ENCODE measurements at regions of chr6 and their contacts with region 1.

Region 1: DNA sequence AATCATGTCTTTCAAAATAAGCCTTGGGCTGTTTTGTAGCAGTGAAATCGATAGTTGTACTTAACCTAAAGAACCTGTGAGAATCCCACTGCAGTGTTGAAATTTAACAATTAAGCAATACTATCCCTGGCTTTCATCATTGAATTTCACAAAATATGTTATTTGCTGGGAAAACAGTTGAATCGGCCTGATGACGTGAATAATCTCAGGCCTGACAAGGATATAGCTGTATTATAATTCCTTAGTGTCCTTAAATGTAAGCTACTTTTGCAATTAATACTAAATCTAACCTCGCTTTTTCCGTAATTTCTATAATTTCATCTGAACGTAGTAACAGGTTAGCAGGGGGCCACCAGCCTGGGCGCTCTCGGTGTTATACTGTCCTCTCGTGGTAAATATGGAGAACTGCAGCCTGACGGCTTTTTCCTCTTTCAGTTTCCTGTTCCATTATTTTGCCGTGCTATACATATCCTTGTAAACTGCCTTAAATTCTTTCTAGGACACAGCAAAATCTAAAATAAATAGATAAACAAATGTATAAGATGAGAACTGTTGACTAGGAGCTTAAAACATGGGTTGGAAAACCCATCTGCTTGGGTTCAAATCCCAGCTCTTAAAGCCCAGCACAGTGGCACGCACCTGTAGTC is 24.0 kb downstream of the MTFR2 start:
- DNase-seq: peak; percentile 69
- ATAC-seq: peak; percentile 83
- H3K4me3 ChIP-seq: peak overlapping the region in 1 of 2 experiments; percentile 21; a peak in 2 of 4 replicates
- H3K27ac ChIP-seq: no peak overlapping the region
- H3K4me1 ChIP-seq: 0 out of 2 replicates have a peak, but pooled peaks cover 3% of the 10 kb centered on the region
- H3K27me3 ChIP-seq: no peaks in the 10 kb centered on the region
- CTCF ChIP-seq: peak; percentile 100

Region 2: DNA sequence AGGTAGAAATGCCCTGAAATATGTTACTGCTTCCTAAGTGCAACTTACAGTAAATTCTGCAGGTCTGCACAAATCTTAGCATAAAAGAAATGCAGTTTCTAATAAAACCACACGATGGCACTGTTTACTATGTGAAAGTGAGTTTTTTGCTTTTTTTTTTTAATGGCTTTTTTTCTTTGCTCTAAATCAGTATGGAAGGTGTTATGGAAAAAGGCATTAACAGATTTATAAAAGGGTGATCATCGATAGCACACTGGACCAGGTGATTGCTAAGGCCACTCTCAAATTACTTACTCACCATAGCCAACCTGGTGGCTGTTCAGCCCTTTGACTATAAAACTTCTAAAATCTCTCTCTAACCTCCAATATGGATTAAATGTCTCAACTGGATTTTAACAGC is 774.5 kb before region 1 on chr6:
- CTCF ChIA-PET with region 1: no interaction called
- POLR2A ChIA-PET with region 1: no interaction called
- in situ Hi-C with region 1: no loop called
- intact Hi-C with region 1: loop called (anchors 5 kb)
- DNase-seq: peak; percentile 15
- ATAC-seq: no peak
- H3K4me3 ChIP-seq: no peak overlapping the region
- H3K27ac ChIP-seq: no peak overlapping the region
- H3K4me1 ChIP-seq: no peaks in the 10 kb centered on the region
- H3K27me3 ChIP-seq: no peaks in the 10 kb centered on the region
- CTCF ChIP-seq: peak; percentile 74; the same call in 1 of the 2 replicates

Region 3: DNA sequence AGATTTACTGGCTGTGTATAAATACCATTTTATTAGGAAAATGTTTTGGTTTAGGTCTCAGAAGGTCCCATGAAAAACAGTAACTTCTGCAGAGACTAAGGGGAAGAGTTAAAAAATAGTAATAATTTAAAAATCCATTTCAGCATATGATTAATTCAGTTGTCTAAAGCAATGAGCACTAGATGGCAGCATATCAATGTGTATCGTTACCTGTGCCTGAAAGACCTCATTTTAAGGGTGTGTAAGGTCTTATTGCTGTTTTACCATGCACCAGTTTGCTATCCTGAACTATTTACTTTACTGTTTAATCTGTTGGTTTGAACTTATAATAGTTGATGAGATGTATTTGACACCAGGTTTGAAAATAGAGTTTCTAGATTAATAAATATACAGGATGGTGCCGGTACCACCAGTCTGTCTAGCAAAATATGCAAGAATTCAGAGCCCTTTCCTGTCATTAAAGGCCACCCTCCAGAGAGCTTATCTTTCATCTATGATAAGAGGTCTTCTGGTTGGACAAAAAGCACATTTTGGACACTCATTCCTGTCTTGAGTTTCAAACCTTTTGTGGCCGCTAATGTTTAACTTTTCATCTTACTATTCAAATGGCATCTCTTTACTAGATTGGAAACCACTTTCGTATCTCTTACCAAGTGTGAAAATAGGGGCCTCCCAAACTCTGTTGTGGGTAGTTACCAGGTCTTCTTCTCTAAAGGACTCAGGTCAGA is 719.7 kb before region 1 on chr6:
- CTCF ChIA-PET with region 1: no interaction called
- POLR2A ChIA-PET with region 1: no interaction called
- in situ Hi-C with region 1: no loop called
- intact Hi-C with region 1: loop called (anchors 1 kb)
- DNase-seq: no peak
- ATAC-seq: peak; percentile 79
- H3K4me3 ChIP-seq: no peak overlapping the region
- H3K27ac ChIP-seq: no peak overlapping the region
- H3K4me1 ChIP-seq: no peaks in the 10 kb centered on the region
- H3K27me3 ChIP-seq: no peaks in the 10 kb centered on the region
- CTCF ChIP-seq: peak; percentile 67; the same call in 1 of the 2 replicates

Region 4: GRCh38 chr6:135535989-135536414 is 690.1 kb before region 1 on chr6:
- CTCF ChIA-PET with region 1: interaction called, 15 read pairs
- POLR2A ChIA-PET with region 1: no interaction called
- in situ Hi-C with region 1: no loop called
- intact Hi-C with region 1: loop called (anchors 1 kb)
- DNase-seq: no peak
- ATAC-seq: peak; percentile 70
- H3K4me3 ChIP-seq: no peak overlapping the region
- H3K27ac ChIP-seq: no peak overlapping the region
- H3K4me1 ChIP-seq: no peaks in the 10 kb centered on the region
- H3K27me3 ChIP-seq: no peaks in the 10 kb centered on the region
- CTCF ChIP-seq: peak; percentile 78

Region 5: GRCh38 chr6:135675862-135676261 is 550.3 kb before region 1 on chr6:
- CTCF ChIA-PET with region 1: no interaction called
- POLR2A ChIA-PET with region 1: no interaction called
- in situ Hi-C with region 1: no loop called
- intact Hi-C with region 1: loop called (anchors 10 kb)
- DNase-seq: peak; percentile 4
- ATAC-seq: no peak
- H3K4me3 ChIP-seq: no peak overlapping the region
- H3K27ac ChIP-seq: no peak overlapping the region
- H3K4me1 ChIP-seq: no peaks in the 10 kb centered on the region
- H3K27me3 ChIP-seq: no peaks in the 10 kb centered on the region
- CTCF ChIP-seq: peak; percentile 24; the same call in 1 of the 2 replicates

Region 6: GRCh38 chr6:136031982-136032381 is 194.2 kb before region 1 on chr6:
- CTCF ChIA-PET with region 1: no interaction called
- POLR2A ChIA-PET with region 1: no interaction called
- in situ Hi-C with region 1: no loop called
- intact Hi-C with region 1: loop called (anchors 10 kb)
- DNase-seq: no peak
- ATAC-seq: no peak
- H3K4me3 ChIP-seq: no peak overlapping the region
- H3K27ac ChIP-seq: no peak overlapping the region
- H3K4me1 ChIP-seq: no peaks in the 10 kb centered on the region
- H3K27me3 ChIP-seq: no peaks in the 10 kb centered on the region
- CTCF ChIP-seq: peak; percentile 43; the same call in 1 of the 2 replicates

Measured in Panc1 (cell line).